Body of pancreas (tissue), 4 donors: ENCODE measurements at regions of chr2 and their contacts with region 1.

Region 1: GRCh38 chr2:28958689-28959088 is 22.4 kb upstream of the TOGARAM2 start:
- DNase-seq: peak; percentile 41 to 64 (median 46)
- ATAC-seq: peak; percentile 76
- H3K4me3 ChIP-seq: no peak overlapping the region
- H3K27ac ChIP-seq: no peak overlapping the region
- H3K4me1 ChIP-seq: peaks cover 4% of the 10 kb centered on the region
- H3K27me3 ChIP-seq: no peaks in the 10 kb centered on the region
- CTCF ChIP-seq: peak; percentile 52 to 86 (median 73)
- POLR2A ChIP-seq: no peak

Region 2: GRCh38 chr2:29196792-29197788 is 238.4 kb after region 1 on chr2:
- intact Hi-C with region 1: loop called (anchors 5 kb)
- DNase-seq: peak; percentile 70 to 80 (median 74)
- ATAC-seq: peak; percentile 71
- H3K4me3 ChIP-seq: no peak overlapping the region
- H3K27ac ChIP-seq: no peak overlapping the region
- H3K4me1 ChIP-seq: no peaks in the 10 kb centered on the region
- H3K27me3 ChIP-seq: no peaks in the 10 kb centered on the region
- CTCF ChIP-seq: peak; percentile 50 to 85 (median 79)
- POLR2A ChIP-seq: no peak